ENCODE measurements at regions of chr22 and their contacts with region 1.

Region 1: DNA sequence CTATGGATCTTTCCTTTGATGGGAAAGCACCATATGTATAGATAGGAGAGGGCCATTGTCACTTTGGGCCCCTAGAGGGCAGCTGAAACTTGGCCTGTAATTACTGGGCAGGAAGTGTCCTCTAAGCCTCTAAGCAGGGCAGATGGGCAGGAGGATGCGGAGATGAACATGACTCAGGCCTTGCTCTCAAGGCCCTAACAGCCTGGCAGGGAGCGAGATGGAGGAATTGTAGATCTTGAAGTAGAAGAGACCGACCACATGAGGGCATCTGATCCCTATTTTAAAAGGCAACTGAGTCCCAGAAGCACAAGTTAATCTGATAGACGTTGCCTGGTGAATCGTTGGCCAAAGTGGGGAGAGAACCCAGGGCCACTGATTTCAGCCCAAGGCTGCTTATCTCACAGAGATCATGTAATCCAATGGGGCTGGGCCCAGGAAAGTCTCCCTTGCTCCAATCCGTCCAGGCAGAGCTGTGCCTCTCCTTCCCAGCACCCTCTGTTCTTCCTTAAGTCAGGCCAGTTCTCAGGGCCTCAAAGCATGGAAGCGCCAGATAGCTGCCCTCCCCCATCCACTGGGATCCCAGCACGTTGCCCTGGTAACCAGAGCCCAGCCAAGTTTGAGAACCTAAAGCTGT is 2.5 kb upstream of the SEPTIN3 start:
- DNase-seq: peak in 6 of 10 donors; percentile 46 to 60 (median 56)
- H3K4me3 ChIP-seq: no peak overlapping the region
- H3K27ac ChIP-seq: peak overlapping the region in 54 of 59 donors; percentile 2 to 85 (median 60)
- H3K27me3 ChIP-seq: no peaks in the 10 kb centered on the region
- CTCF ChIP-seq: peak in 54 of 56 donors; percentile 9 to 73 (median 50)

Region 2: DNA sequence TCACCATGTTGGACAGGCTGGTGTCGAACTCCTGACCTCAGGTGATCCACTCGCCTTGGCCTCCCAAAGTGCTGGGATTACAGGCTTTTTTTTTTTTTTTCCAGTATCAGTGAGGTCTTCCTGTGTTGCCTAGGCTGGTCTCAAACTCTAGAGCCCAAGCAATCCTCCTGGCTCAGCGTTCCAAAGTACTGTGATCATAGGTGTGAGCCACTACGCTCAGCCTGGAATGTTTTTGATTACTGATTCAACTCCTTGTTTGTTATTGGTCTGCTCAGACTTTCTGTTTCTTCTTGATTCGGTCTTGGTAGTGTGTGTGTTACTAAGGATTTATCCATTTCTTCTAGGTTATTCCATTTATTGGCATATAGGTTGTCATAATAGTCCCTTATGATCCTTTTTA is 72.5 kb after region 1 on chr22:
- intact Hi-C with region 1: no loop called
- DNase-seq: no peak
- H3K4me3 ChIP-seq: no peak overlapping the region
- H3K27ac ChIP-seq: no peak overlapping the region
- H3K27me3 ChIP-seq: no peaks in the 10 kb centered on the region
- CTCF ChIP-seq: no peak

Region 3: GRCh38 chr22:42090596-42091454 is 124.1 kb after region 1 on chr22 and contains the start of gene NDUFA6:
- intact Hi-C with region 1: loop called (anchors 5 kb)
- DNase-seq: peak; percentile 99
- H3K4me3 ChIP-seq: peak within 1 kb of the TSS; percentile 66 to 99 (median 92)
- H3K27ac ChIP-seq: peak within 1 kb of the TSS; percentile 73 to 99 (median 94)
- H3K27me3 ChIP-seq: no peaks in the 10 kb centered on the region
- CTCF ChIP-seq: peak; percentile 74 to 99 (median 96)
- total RNA-seq, gene NDUFA6: 33.6 to 81.3 (median 55.8) TPM

Region 4: DNA sequence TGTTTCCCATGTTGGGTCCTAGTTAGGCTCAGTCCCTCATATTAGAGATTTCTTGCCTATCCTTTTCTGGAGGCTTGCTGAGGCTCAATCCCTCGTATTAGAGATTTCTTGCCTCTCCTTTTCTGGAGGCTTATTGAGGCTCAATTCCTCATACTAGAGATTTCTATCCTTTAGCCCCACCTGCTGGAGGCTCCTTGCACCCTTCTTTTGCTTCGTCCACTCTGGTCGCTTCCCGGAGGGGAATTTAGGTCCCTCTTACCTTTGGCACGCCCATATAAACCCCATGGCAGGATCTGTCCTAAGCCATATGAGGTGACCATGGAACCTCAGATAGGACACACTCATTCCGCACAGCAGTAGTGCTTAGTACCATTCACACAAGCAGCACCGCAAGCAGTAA is 148.0 kb after region 1 on chr22:
- intact Hi-C with region 1: loop called in 1 of 2 experiments (anchors 5 kb)
- DNase-seq: no peak
- H3K4me3 ChIP-seq: no peak overlapping the region
- H3K27ac ChIP-seq: no peak overlapping the region
- H3K27me3 ChIP-seq: no peaks in the 10 kb centered on the region
- CTCF ChIP-seq: peak in 43 of 56 donors; percentile 9 to 59 (median 37)

Region 5: DNA sequence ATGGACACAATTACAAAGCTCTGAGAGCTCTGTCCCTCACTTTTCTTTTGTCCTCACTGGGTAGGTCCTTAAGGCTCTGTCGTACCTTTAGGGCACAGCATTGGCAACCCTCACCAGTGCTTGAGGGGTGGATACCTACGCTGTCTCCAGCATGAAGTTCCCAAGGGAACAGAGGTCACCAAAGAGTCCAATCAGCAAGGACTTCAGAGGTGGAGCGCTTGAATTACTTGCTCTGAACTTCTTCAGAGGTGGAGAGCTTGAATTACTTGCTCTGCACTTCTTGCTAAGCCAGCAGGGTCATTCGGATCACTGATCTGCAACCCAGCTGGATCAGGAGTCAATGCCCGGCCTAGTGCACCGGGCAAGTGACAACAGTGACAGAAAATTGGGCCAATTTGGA is 517.8 kb after region 1 on chr22:
- intact Hi-C with region 1: no loop called
- DNase-seq: no peak
- H3K4me3 ChIP-seq: no peak overlapping the region
- H3K27ac ChIP-seq: peak overlapping the region in 15 of 59 donors; percentile 6 to 74 (median 61)
- H3K27me3 ChIP-seq: peaks cover 0 to 2% (median 0%) of the 10 kb centered on the region in 45 donors
- CTCF ChIP-seq: no peak

Measured in dorsolateral prefrontal cortex (tissue), 120 donors.